Heart left ventricle (tissue), 16 donors: ENCODE measurements at regions of chr1 and their contacts with region 1.

Region 1: DNA sequence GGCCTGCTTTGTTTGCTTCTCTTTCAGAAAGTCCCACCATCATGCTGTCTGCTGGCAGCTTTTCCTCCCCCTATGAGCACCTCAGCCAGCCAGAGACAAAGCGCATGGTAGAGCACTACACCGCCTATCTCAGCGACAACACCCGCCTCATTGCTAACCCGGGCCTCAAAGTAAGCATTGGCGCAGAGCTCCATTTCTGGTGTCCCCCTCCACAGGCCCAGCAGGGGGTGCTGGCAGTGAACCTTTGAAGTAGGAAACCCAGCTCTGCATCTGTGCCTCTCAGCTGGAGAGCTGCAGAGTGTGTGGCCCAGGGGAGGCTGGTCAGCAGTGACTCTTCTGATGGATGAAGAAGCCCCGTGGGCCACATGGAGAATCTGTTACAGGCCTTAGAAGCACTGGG is 81.2 kb upstream of the RAVER2 start:
- DNase-seq: no peak
- ATAC-seq: peak in 2 of 4 donors; percentile 18 to 36
- H3K4me3 ChIP-seq: no peak overlapping the region
- H3K27ac ChIP-seq: no peak overlapping the region
- H3K4me1 ChIP-seq: no peaks in the 10 kb centered on the region
- H3K27me3 ChIP-seq: no peaks in the 10 kb centered on the region
- CTCF ChIP-seq: peak in 2 of 12 donors; percentile 13 to 26
- POLR2A ChIP-seq: no peak

Region 2: DNA sequence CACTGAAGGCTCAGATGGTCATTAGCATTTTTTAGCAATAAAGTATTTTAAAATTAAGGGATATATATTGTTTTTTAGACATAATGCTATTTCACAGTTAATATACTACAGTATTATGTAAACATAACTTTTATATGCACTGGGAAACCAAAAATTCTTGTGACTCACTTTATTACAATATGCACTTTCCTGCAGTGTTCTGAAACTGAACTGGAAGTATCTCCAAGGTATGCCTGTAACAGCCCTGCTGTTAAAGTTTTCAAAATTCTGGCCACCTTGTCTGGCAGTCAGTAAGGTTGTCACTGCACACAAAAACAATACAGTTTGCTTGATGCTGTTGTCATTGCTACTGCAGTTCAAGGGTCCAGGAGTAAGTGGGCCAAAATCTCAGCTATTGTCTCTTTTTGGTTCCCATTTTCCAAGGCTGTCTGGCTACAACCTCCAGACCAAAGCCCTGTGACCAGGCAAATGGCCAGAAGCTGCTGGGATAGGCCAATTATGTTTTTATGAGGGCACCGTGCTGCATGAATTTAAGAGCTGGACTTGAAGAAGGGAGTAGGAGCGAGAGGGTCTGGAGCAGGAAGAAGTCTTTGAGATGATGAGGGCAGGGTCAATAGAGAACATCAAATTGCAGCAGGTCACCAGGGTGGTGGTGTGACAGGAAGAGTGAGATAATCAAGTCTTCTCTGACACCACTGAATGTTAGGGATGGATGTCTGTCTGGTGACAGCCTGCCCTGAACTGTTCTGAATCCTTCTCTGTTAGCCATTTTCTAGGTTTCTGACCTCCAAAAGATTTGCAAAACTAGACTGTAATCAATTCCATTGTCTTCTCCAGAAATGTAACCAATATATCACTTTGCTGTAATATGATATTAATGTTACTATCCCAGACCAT is 276.0 kb before region 1 on chr1:
- intact Hi-C with region 1: loop called in 1 of 10 experiments (anchors 10 kb)
- DNase-seq: peak in 1 of 5 donors; percentile 18
- ATAC-seq: no peak
- H3K4me3 ChIP-seq: no peak overlapping the region
- H3K27ac ChIP-seq: peak overlapping the region in 3 of 12 donors; percentile 18 to 45 (median 41)
- H3K4me1 ChIP-seq: peaks cover 0 to 9% (median 0%) of the 10 kb centered on the region in 12 donors
- H3K27me3 ChIP-seq: no peaks in the 10 kb centered on the region
- CTCF ChIP-seq: no peak
- POLR2A ChIP-seq: no peak